Pancreas (tissue), 10 donors: ENCODE measurements at regions of chr1 and their contacts with region 1.

Region 1: GRCh38 chr1:202122639-202123335 is at the start of gene GPR37L1:
- DNase-seq: peak in 4 of 6 donors; percentile 60 to 83 (median 69)
- ATAC-seq: peak in 3 of 4 donors; percentile 56 to 68 (median 67)
- H3K4me3 ChIP-seq: no peak within 1 kb of the TSS
- H3K27ac ChIP-seq: no peak within 1 kb of the TSS
- H3K4me1 ChIP-seq: no peaks in the 10 kb centered on the region
- H3K27me3 ChIP-seq: no peaks in the 10 kb centered on the region
- CTCF ChIP-seq: peak in 1 of 4 donors; percentile 13
- total RNA-seq, gene GPR37L1: 0.03 to 0.25 (median 0.07) TPM in 4 of 6 donors, not detected in the others

Region 2: GRCh38 chr1:201999625-202000238 is 123.1 kb before region 1 on chr1:
- intact Hi-C with region 1: loop called (anchors 5 to 10 kb)
- DNase-seq: peak in 4 of 6 donors; percentile 21 to 57 (median 38)
- ATAC-seq: peak; percentile 74 to 92 (median 88)
- H3K4me3 ChIP-seq: no peak overlapping the region
- H3K27ac ChIP-seq: no peak overlapping the region
- H3K4me1 ChIP-seq: no peaks in the 10 kb centered on the region
- H3K27me3 ChIP-seq: no peaks in the 10 kb centered on the region
- CTCF ChIP-seq: peak; percentile 43 to 69 (median 59)